OCI-LY7 (cell line): ENCODE measurements at regions of chr3 and their contacts with region 1.

Region 1: DNA sequence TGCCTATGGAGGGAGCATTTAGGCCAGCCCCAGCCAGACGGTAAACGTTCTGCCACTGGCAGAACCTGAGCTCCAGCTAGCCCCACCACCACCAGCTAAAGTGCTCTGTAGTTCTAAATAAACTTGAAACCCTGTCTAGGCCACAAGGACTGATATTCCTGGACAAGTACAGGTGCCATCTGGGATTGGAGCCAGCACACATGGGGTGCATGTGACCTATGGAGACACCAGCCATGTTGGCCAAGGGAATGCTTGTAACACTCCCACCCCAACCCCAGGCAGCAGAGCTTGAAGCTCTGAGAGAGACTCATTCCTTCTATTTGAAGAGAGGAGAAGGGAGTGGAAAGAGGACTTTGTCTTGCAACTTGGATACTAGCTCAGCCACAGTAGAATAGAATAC is 284.5 kb upstream of the DCBLD2 start:
- DNase-seq: no peak
- H3K4me3 ChIP-seq: no peak overlapping the region
- H3K27ac ChIP-seq: no peak overlapping the region
- H3K4me1 ChIP-seq: no peaks in the 10 kb centered on the region
- CTCF ChIP-seq: no peak

Region 2: DNA sequence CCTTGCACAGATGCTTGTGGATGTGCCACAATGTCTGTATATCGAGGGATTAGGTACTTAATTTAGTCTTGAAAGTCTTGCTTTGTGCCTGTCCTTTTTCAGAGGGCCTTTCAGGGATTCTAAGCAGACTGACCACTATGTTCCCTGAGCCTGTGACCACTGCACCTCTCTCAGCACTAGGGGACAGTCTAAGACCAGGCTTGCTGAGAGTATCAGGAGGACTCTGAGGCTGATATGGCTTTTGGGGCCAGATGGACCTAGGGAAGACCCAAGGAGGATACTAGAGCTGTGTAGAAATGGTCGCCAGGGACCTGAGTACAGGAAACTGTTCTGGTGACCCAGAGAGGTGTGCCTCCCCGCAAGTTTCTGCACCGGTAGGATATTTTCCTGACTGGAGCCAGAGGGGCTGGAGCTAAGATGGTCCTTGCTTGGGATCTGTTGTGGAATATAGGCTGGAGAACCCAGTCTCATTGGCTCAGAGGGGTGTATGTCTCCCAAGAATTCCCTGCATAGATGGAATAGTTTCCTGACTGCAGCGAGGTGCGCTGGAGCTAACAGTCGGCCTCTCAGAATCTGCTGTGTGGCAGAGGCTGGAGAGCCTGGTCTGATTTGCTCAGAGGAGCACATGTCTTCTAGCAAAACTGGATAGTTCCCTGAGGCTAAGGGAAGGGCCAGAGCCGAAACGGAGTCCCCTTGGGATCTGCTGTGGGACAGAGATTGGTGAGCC is 71.3 kb before region 1 on chr3:
- CTCF ChIA-PET with region 1: no interaction called
- POLR2A ChIA-PET with region 1: no interaction called
- intact Hi-C with region 1: no loop called
- DNase-seq: peak; percentile 3
- H3K4me3 ChIP-seq: no peak overlapping the region
- H3K27ac ChIP-seq: no peak overlapping the region
- H3K4me1 ChIP-seq: no peaks in the 10 kb centered on the region
- CTCF ChIP-seq: peak; percentile 48; the same call in 1 of the 2 replicates

Region 3: DNA sequence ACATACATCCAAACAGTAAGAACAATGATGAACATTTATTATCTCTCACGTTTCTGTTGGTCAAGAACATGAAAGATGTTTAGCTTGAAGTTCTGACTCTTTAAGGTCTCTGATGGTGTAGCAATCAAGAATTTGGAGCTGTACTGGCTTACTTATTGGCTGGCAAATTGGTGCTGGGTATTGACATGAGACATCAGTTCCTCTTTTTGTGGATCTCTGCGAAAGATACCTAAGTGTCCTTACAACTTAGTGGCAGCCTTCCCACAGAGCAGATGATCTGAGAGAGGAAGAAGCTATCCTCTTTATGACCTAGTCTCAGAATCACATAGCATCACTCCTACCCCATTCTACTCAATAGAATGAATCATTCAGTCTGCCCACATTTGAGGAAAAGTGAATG is 25.3 kb after region 1 on chr3:
- CTCF ChIA-PET with region 1: no interaction called
- POLR2A ChIA-PET with region 1: no interaction called
- intact Hi-C with region 1: no loop called
- DNase-seq: no peak
- H3K4me3 ChIP-seq: no peak overlapping the region
- H3K27ac ChIP-seq: no peak overlapping the region
- H3K4me1 ChIP-seq: no peaks in the 10 kb centered on the region
- CTCF ChIP-seq: no peak

Region 4: DNA sequence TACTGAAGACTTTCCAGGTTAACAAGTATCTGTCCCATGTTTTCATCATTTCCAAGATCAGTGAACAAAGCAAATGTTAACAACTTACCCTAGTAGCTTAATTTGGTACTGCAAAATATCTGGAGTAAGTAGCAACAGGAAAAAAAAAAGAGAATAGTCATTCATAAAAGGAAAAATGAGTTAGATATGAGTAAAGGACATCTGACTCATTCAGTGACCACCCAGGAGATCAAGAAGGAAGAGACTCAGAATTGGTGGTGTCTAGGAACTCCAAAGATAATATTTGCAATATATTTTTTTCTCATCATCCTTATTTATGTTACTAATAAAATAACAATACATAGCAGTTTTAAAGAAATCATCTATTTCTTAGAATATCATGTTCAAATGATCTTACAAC is 198.6 kb after region 1 on chr3:
- CTCF ChIA-PET with region 1: no interaction called
- POLR2A ChIA-PET with region 1: no interaction called
- intact Hi-C with region 1: no loop called
- DNase-seq: no peak
- H3K4me3 ChIP-seq: no peak overlapping the region
- H3K27ac ChIP-seq: no peak overlapping the region
- H3K4me1 ChIP-seq: no peaks in the 10 kb centered on the region
- CTCF ChIP-seq: no peak

Region 5: DNA sequence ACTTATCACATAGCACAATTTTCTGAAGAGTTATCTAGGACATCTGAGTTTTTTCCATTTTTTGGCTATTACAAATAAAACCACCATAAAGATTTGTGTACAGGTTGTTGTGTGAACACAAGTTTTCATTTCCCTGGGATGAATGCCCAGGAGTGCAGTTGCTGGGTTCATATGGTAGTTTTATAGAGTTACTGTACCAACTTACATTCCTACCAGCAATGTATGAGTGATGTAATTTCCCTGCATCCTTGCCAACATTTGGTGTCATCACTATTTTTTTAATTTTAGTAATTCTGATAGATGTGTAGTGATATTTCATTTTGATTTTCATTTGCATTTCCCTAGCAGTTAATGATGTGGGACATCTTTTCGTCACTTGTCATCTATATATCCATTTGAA is 907.8 kb after region 1 on chr3:
- CTCF ChIA-PET with region 1: no interaction called
- POLR2A ChIA-PET with region 1: interaction called, 10 read pairs
- intact Hi-C with region 1: no loop called
- DNase-seq: no peak
- H3K4me3 ChIP-seq: no peak overlapping the region
- H3K27ac ChIP-seq: no peak overlapping the region
- H3K4me1 ChIP-seq: no peaks in the 10 kb centered on the region
- CTCF ChIP-seq: no peak